ENCODE measurements at regions of chr13 and their contacts with region 1.

Region 1: GRCh38 chr13:27270594-27271520 is at the start of gene RASL11A:
- DNase-seq: peak; percentile 85 to 90
- ATAC-seq: peak; percentile 93 to 95 (median 94)
- H3K4me3 ChIP-seq: peak within 1 kb of the TSS; percentile 50 to 91 (median 78)
- H3K27ac ChIP-seq: peak within 1 kb of the TSS; percentile 79 to 95 (median 92)
- H3K4me1 ChIP-seq: peaks cover 0 to 68% (median 33%) of the 10 kb centered on the region in 9 donors
- H3K27me3 ChIP-seq: no peaks in the 10 kb centered on the region
- CTCF ChIP-seq: peak; percentile 91 to 99 (median 97)
- total RNA-seq, gene RASL11A: 1.8 to 68.7 (median 3.1) TPM

Region 2: GRCh38 chr13:27251166-27252091 is 19.4 kb before region 1 on chr13 and contains the start of gene RPL21:
- intact Hi-C with region 1: loop called in 2 of 10 experiments (anchors 2 kb)
- DNase-seq: peak; percentile 95 to 98
- ATAC-seq: peak; percentile 98 to 99 (median 99)
- H3K4me3 ChIP-seq: peak within 1 kb of the TSS; percentile 74 to 94 (median 80)
- H3K27ac ChIP-seq: peak within 1 kb of the TSS; percentile 90 to 99 (median 96)
- H3K4me1 ChIP-seq: peaks cover 6 to 52% (median 39%) of the 10 kb centered on the region in 9 donors
- H3K27me3 ChIP-seq: no peaks in the 10 kb centered on the region
- CTCF ChIP-seq: peak in 1 of 9 donors; percentile 5
- total RNA-seq, gene RPL21: 498 to 733 (median 598) TPM

Region 3: GRCh38 chr13:27607125-27607524 is 336.3 kb after region 1 on chr13:
- intact Hi-C with region 1: no loop called
- DNase-seq: peak in 1 of 2 donors; percentile 23
- ATAC-seq: peak in 7 of 8 donors; percentile 52 to 91 (median 76)
- H3K4me3 ChIP-seq: no peak overlapping the region
- H3K27ac ChIP-seq: peak overlapping the region in 9 of 10 donors; percentile 1 to 68 (median 61)
- H3K4me1 ChIP-seq: peaks cover 0 to 56% (median 33%) of the 10 kb centered on the region in 9 donors
- H3K27me3 ChIP-seq: no peaks in the 10 kb centered on the region
- CTCF ChIP-seq: no peak

Measured in heart right ventricle (tissue), 16 donors.